Posterior cingulate gyrus (tissue), 11 donors: ENCODE measurements at regions of chr1 and their contacts with region 1.

Region 1: DNA sequence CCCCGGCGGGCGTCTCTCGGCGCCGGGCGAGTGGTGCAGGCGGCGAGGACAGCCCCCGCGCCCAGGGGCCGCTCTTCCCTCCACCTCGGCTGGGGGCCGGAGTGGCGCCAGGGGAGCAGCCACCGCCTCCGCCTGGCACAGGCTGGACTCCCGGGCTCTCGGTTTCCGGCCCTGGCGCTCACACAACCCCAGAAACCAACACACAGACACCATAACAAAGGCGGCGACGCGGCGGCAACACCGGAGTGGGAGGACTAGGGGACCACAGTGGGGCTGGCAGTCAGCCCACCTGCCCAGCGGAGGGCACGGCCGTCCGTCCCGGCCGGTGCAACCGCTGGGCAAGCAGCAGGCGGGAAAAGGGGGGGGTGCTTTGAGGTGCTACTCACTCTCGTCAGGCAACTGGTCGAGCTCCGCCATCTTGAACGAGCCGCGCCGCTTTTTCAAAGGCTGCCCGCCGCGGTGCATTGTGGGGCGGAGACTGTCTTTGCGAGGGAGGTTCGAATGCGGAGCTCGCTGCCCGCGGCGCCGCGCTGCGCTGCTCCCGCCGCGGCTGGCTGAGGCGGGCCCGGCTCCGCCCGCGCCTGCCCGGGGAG is at the start of gene LIN9:
- DNase-seq: peak; percentile 82 to 97 (median 90)

Region 2: GRCh38 chr1:226186124-226187018 is 122.4 kb before region 1 on chr1 and contains the start of gene ACBD3:
- intact Hi-C with region 1: loop called (anchors 2 kb)
- DNase-seq: peak; percentile 86 to 98 (median 90)